Activated CD4-positive, alpha-beta memory T cell treated with anti-CD3 and anti-CD28 coated beads for 36 hours (primary cell): ENCODE measurements at regions of chr1 and their contacts with region 1.

Region 1: DNA sequence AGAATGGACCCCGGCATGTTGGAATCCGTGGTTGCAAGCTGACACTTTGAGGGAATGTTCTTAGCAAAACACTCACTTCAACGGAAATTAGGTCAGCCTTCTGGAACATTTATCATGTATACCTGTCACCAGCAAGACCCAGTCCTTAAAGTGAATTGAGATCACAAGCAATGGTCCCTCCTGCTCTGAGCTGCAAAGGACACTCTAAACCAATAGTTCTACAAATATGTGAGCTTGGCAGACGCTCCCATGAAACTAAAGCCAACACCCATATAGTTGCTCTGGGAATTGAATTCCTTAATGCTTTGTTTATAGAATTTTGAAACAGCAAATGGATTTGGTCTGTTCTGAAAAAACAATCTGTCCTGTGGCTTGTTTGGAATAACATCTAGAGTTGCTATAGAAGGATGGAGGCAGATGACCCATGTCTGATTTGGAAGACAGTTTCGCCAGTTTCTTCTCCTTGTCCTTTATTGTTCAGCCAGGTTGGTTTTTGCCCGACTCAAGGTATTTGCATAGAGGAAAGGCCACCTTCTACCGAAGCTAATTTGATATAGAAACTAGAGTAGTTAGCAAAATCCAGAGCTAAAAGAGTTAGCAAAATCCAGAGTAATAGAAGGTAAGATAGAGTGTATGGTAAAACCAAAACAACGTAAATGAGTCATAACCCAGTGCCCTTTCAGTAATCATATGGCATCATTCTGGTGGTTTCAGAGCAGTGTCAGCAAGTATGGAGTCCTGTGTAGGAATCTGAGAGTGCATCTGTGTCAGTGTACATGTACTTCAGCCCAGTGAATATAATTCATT is 236.2 kb downstream of the NFIA start:
- DNase-seq: peak; percentile 44
- H3K4me3 Mint-ChIP-seq: peak overlapping the region; percentile 42
- H3K27ac Mint-ChIP-seq: peak overlapping the region; percentile 88
- H3K4me1 Mint-ChIP-seq: peaks cover 48% of the 10 kb centered on the region
- H3K27me3 Mint-ChIP-seq: peaks cover 2% of the 10 kb centered on the region

Region 2: GRCh38 chr1:61270761-61271411 is 47.6 kb before region 1 on chr1:
- CTCF ChIA-PET with region 1: interaction called, 15 read pairs
- POLR2A ChIA-PET with region 1: interaction called, 51 read pairs
- intact Hi-C with region 1: loop called (anchors 1 kb)
- DNase-seq: peak; percentile 58
- H3K4me3 Mint-ChIP-seq: peak overlapping the region; percentile 26
- H3K27ac Mint-ChIP-seq: peak overlapping the region; percentile 86
- H3K4me1 Mint-ChIP-seq: peaks cover 53% of the 10 kb centered on the region
- H3K27me3 Mint-ChIP-seq: peaks cover 5% of the 10 kb centered on the region

Region 3: DNA sequence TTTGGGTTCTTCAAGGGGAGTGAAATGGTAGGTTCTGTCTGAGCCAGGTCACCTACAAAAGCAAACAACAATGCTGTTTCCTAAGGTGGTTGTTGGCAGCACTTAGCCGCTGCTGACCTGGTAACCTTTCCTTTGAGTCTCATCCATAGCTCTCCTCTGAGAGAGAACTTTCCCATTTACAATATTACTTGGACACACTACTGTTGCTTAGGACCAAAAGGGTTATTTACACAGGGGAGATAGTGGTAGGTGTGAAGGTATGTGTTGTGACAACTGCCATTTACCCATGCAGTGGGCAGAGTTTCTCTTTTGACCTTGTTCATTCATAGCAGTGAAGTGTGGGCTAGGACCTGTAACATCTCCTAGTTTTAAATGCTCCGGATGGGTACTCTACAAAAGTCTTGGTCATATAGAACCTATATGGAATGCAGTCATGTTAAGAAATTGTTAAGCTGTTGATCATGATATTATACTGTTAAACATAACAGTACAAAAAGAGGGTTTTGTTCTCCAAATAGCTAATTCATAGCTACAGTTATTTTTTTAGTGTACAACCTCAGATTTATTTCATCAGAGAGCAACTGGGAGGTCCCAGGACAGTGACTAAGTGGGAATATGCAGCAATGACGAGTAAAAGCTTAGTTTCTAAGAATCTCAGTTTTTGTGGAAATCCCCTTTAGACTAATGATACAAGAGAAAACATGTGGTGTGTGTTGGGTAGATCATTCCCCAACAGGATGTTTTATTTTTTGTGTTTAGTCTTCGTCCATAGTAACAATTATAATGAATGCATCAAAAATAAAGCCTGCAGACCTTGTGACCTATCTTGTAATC is 16.5 kb before region 1 on chr1:
- CTCF ChIA-PET with region 1: interaction called, 22 read pairs
- POLR2A ChIA-PET with region 1: interaction called, 83 read pairs
- intact Hi-C with region 1: loop called (anchors 1 kb)
- DNase-seq: peak; percentile 51
- H3K4me3 Mint-ChIP-seq: peak overlapping the region; percentile 1
- H3K27ac Mint-ChIP-seq: peak overlapping the region; percentile 89
- H3K4me1 Mint-ChIP-seq: peaks cover 35% of the 10 kb centered on the region
- H3K27me3 Mint-ChIP-seq: peaks cover 5% of the 10 kb centered on the region

Region 4: GRCh38 chr1:61307422-61308142 is 10.9 kb before region 1 on chr1:
- CTCF ChIA-PET with region 1: interaction called, 22 read pairs
- POLR2A ChIA-PET with region 1: interaction called, 83 read pairs
- intact Hi-C with region 1: loop called (anchors 1 kb)
- DNase-seq: no peak
- H3K4me3 Mint-ChIP-seq: no peak overlapping the region
- H3K27ac Mint-ChIP-seq: peak overlapping the region; percentile 8
- H3K4me1 Mint-ChIP-seq: peaks cover 30% of the 10 kb centered on the region
- H3K27me3 Mint-ChIP-seq: peaks cover 5% of the 10 kb centered on the region

Region 5: DNA sequence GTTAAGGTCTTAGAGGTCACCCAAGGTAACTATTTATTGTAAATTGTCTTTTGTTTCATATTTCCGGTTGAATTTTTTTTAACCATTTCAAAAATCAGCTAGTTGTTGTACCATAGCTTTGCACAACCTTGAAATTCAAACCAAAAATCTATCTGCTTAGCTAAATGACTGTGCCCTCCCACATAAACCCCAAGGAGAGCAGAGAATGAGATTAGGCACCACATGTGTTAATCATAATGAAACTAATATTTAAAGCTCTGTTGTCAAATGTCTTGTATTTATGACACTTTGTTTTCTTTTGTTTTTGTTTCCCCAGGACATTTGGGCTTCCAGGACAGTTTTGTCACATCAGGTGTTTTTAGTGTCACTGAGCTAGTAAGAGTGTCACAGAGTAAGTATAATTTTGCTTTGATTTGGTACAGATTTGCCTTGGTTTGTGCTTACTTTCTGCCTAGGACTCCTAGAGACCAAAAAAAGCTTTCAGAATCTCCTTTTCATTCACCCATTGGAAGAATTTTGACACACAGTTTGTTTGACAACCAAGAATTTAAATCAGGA is 13.8 kb after region 1 on chr1:
- CTCF ChIA-PET with region 1: interaction called, 20 read pairs
- POLR2A ChIA-PET with region 1: interaction called, 31 read pairs
- intact Hi-C with region 1: loop called (anchors 1 kb)
- DNase-seq: peak; percentile 30
- H3K4me3 Mint-ChIP-seq: no peak overlapping the region
- H3K27ac Mint-ChIP-seq: peak overlapping the region; percentile 67
- H3K4me1 Mint-ChIP-seq: peaks cover 24% of the 10 kb centered on the region
- H3K27me3 Mint-ChIP-seq: peaks cover 2% of the 10 kb centered on the region

Region 6: DNA sequence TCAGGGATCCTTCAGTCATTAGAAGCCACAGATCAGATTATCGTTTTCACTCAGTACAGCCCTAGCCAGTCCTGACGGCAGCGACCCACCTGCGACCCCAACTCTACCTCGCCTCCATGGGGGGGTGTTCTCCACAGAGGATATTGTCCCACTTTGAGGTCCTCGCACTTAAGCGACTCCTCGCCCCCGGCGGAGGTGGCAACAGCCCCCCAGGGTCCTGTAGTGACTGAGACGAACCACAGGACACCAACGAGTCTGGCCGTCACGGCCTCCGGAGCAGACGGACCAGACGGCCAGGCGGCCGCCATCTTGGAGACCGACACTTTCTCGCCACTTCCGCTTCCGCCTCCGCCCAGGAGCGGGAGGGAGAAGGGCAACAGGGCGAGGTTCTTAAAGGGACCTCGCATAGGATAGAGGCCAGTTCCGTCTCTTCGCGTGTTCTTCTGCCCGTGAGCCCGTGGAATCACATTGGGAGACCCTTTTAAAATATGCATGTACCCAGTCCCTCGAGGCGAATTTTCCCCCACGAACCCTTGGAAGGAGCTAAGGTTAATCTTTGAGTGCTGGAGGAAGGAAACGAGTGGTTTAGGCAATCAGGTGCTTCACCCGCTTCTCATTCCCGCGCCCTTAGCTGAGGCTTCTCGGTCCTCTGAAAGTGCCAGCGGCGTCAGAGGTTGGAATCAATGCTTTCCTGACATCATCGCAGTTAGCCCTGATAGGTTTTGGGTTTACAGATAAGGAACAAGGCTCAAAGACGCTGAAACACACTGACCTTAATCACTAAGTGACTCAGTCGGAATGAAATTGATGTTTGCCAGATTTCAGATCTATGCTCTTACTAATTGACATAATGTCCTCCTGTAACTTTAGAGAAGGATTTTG is 406.5 kb after region 1 on chr1 and contains the start of gene TM2D1:
- CTCF ChIA-PET with region 1: no interaction called
- POLR2A ChIA-PET with region 1: no interaction called
- intact Hi-C with region 1: loop called (anchors 5 kb)
- DNase-seq: peak; percentile 93
- H3K4me3 Mint-ChIP-seq: peak within 1 kb of the TSS; percentile 98
- H3K27ac Mint-ChIP-seq: peak within 1 kb of the TSS; percentile 99
- H3K4me1 Mint-ChIP-seq: peaks cover 18% of the 10 kb centered on the region
- H3K27me3 Mint-ChIP-seq: no peaks in the 10 kb centered on the region
- total RNA-seq, gene TM2D1: 29.7 to 34.3 TPM